Heart right ventricle (tissue), 16 donors: ENCODE measurements at regions of chr13 and their contacts with region 1.

Region 1: GRCh38 chr13:31742097-31742734 is 2.9 kb downstream of the RXFP2 start:
- DNase-seq: peak; percentile 44 to 64
- ATAC-seq: peak in 7 of 8 donors; percentile 66 to 87 (median 74)
- H3K4me3 ChIP-seq: no peak overlapping the region
- H3K27ac ChIP-seq: no peak overlapping the region
- H3K4me1 ChIP-seq: peaks cover 0 to 6% (median 0%) of the 10 kb centered on the region in 9 donors
- H3K27me3 ChIP-seq: peaks cover 0 to 24% (median 7%) of the 10 kb centered on the region in 7 donors
- CTCF ChIP-seq: peak; percentile 95 to 99 (median 99)

Region 2: DNA sequence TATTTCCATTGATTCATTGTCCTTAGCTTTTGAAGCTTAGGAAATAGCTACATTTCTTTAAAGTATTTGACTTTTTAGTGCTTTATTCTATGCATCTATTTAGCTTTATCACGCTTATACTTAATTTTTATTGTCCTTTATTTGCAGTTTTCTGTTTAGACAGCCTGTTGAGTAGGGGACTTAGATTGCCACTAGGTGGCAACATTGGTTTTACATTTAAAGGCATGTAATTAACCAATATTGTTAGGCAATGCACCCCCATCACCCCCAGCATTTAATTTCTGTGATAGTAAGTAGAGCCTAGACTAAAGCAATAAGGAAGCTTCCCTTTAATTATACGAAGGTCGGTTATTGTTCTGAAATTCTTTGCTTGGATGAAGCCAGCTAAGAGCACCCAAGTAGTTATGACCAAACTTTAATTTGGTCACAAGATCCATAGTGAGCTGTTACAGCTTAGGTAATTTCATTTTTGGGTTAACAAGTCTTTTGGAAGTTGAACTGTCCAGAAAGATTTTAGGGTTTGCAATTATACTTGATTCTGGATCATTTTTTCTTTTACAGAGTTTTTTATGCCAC is 505.9 kb before region 1 on chr13:
- intact Hi-C with region 1: loop called in 7 of 10 experiments (anchors 5 to 10 kb)
- DNase-seq: no peak
- ATAC-seq: peak in 4 of 8 donors; percentile 53 to 63 (median 58)
- H3K4me3 ChIP-seq: no peak overlapping the region
- H3K27ac ChIP-seq: no peak overlapping the region
- H3K4me1 ChIP-seq: no peaks in the 10 kb centered on the region
- H3K27me3 ChIP-seq: no peaks in the 10 kb centered on the region
- CTCF ChIP-seq: peak; percentile 47 to 77 (median 70)

Region 3: DNA sequence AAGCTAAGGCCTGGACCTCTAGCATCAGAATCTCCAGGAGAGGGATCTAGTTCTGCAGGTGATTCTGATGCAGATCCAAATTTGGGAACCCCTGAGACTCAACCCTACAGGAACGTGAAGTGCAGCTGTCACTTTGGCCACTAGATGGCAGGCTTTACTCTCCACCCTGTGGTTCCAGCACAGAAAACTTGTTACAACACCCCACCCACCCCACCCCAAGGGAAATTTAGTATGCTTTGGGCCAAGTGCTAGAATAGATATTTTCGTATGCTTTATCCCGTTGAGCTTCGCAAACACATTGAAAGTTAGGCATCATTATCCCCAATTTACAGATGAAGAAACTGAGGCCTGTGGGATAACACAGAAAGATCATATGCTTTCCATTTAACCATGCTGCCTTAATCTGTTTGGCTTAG is 310.5 kb before region 1 on chr13:
- intact Hi-C with region 1: loop called (anchors 1 to 5 kb)
- DNase-seq: peak; percentile 22 to 55
- ATAC-seq: peak in 5 of 8 donors; percentile 48 to 73 (median 55)
- H3K4me3 ChIP-seq: no peak overlapping the region
- H3K27ac ChIP-seq: no peak overlapping the region
- H3K4me1 ChIP-seq: no peaks in the 10 kb centered on the region
- H3K27me3 ChIP-seq: peaks cover 0 to 8% (median 0%) of the 10 kb centered on the region in 7 donors
- CTCF ChIP-seq: peak; percentile 67 to 94 (median 88)

Region 4: GRCh38 chr13:31538067-31539042 is 203.9 kb before region 1 on chr13:
- intact Hi-C with region 1: loop called in 9 of 10 experiments (anchors 5 to 10 kb)
- DNase-seq: no peak
- ATAC-seq: peak in 2 of 8 donors; percentile 50 to 58
- H3K4me3 ChIP-seq: no peak overlapping the region
- H3K27ac ChIP-seq: no peak overlapping the region
- H3K4me1 ChIP-seq: no peaks in the 10 kb centered on the region
- H3K27me3 ChIP-seq: peaks cover 0 to 6% (median 0%) of the 10 kb centered on the region in 7 donors
- CTCF ChIP-seq: peak in 8 of 9 donors; percentile 15 to 67 (median 60)

Region 5: DNA sequence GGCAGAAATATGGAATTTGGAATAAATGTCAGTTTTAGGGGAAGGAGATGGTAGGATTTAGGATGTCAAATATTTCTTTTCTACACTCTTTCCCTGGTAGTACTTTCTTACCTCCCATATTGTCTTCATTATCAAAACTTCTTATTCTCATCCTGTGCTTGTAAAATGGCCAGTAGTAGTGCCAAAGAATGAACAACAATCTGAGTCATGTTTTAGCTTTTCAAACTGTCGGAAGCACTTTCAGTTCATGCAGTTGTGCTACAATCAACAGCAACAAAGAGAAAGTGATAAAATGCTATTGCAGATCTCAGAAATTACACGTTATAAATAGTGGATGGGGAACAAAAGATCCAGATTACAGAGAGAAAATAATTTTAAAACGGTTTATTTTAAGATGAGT is 196.6 kb before region 1 on chr13:
- intact Hi-C with region 1: loop called in 2 of 10 experiments (anchors 10 kb)
- DNase-seq: no peak
- ATAC-seq: no peak
- H3K4me3 ChIP-seq: no peak overlapping the region
- H3K27ac ChIP-seq: no peak overlapping the region
- H3K4me1 ChIP-seq: peaks cover 0 to 11% (median 0%) of the 10 kb centered on the region in 9 donors
- H3K27me3 ChIP-seq: no peaks in the 10 kb centered on the region
- CTCF ChIP-seq: no peak

Region 6: GRCh38 chr13:31663880-31664585 is 78.2 kb before region 1 on chr13:
- intact Hi-C with region 1: no loop called
- DNase-seq: no peak
- ATAC-seq: no peak
- H3K4me3 ChIP-seq: no peak overlapping the region
- H3K27ac ChIP-seq: no peak overlapping the region
- H3K4me1 ChIP-seq: no peaks in the 10 kb centered on the region
- H3K27me3 ChIP-seq: no peaks in the 10 kb centered on the region
- CTCF ChIP-seq: no peak